Activated naive CD8-positive, alpha-beta T cell treated with anti-CD3 and anti-CD28 coated beads, Interleukin-2, amount 10 ng/mL, durations not matched to agents 7 days and 5 days (primary cell): ENCODE measurements at regions of chr17 and their contacts with region 1.

Region 1: GRCh38 chr17:39730095-39730921 is at the start of gene MIEN1:
- DNase-seq: peak; percentile 100
- ATAC-seq: peak; percentile 86
- H3K4me3 Mint-ChIP-seq: peak within 1 kb of the TSS; percentile 96
- H3K27ac Mint-ChIP-seq: peak within 1 kb of the TSS; percentile 92
- H3K4me1 Mint-ChIP-seq: peaks cover 12% of the 10 kb centered on the region
- H3K27me3 Mint-ChIP-seq: peaks cover 7% of the 10 kb centered on the region
- total RNA-seq, gene MIEN1: 38.1 to 38.6 TPM

Region 2: GRCh38 chr17:39687811-39688518 is 42.3 kb before region 1 on chr17 and contains the start of gene PGAP3:
- POLR2A ChIA-PET with region 1: interaction called, 20 read pairs
- DNase-seq: peak; percentile 88
- ATAC-seq: peak; percentile 94
- H3K4me3 Mint-ChIP-seq: peak within 1 kb of the TSS; percentile 88
- H3K27ac Mint-ChIP-seq: peak within 1 kb of the TSS; percentile 89
- H3K4me1 Mint-ChIP-seq: peaks cover 14% of the 10 kb centered on the region
- H3K27me3 Mint-ChIP-seq: no peaks in the 10 kb centered on the region
- total RNA-seq, gene PGAP3: 18.3 to 23.9 TPM

Region 3: DNA sequence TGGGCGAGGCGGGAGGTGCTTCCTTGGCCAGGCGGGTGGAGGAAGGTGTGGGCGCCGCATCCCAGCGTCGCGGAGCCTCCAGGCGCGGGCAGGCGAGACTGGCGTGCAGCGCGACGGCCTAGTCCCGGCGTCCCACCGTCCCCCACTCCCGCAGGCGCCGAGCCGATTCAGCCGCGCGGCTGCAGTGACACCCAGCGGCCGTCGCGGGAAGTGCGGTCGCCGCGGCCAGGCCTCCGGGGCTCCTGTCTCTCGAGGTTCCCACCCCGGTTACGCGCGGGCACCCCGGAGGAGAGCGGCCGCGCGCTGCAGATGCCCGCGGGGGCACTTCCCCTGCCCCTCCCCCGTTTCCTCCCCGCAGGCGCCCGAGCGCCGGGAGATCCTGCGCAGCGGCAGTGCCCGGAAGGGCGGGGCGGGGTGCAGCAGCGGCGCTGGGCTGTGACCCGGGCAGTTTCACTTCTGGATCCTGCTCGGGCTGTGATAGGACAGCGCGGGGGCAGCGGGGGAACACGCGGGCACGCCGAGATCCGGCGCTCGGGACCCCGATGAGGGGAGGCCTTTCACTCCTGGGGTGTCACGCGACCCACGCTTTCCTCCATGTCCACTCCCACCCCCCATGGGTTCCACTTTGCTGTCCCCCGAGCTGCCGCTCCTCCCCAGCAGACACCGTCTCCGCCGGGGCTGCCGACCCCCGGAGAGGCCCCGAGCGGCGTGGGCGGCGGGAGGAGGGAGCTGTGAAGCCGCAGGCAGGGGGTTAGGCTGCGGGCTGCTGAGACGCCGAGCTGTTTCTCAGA is 24.0 kb after region 1 on chr17:
- POLR2A ChIA-PET with region 1: interaction called, 14 read pairs
- DNase-seq: peak; percentile 99
- ATAC-seq: peak; percentile 90
- H3K4me3 Mint-ChIP-seq: peak overlapping the region; percentile 88
- H3K27ac Mint-ChIP-seq: peak overlapping the region; percentile 93
- H3K4me1 Mint-ChIP-seq: peaks cover 47% of the 10 kb centered on the region
- H3K27me3 Mint-ChIP-seq: no peaks in the 10 kb centered on the region

Region 4: DNA sequence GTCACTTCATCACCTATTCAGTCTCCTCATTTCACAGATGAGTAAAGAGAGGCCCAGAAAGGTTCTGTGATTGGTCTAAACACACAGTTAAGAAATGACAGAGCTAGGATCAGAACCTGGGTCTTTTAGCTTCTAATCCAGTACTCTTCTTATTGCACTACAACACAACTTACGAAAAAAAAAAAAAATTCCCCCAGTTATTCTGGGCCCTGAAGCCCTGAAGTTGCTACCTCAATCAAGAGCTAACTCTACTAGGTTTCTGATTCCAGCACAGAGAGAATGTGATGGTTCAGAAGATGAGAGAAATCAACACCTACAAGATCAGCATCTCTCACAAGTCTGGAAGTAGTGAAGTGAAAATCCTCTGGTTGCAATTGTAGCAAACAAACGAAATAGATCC is 44.7 kb after region 1 on chr17:
- POLR2A ChIA-PET with region 1: no interaction called
- DNase-seq: no peak
- ATAC-seq: no peak
- H3K4me3 Mint-ChIP-seq: peak overlapping the region; percentile 85
- H3K27ac Mint-ChIP-seq: peak overlapping the region; percentile 87
- H3K4me1 Mint-ChIP-seq: peaks cover 78% of the 10 kb centered on the region
- H3K27me3 Mint-ChIP-seq: no peaks in the 10 kb centered on the region

Region 5: DNA sequence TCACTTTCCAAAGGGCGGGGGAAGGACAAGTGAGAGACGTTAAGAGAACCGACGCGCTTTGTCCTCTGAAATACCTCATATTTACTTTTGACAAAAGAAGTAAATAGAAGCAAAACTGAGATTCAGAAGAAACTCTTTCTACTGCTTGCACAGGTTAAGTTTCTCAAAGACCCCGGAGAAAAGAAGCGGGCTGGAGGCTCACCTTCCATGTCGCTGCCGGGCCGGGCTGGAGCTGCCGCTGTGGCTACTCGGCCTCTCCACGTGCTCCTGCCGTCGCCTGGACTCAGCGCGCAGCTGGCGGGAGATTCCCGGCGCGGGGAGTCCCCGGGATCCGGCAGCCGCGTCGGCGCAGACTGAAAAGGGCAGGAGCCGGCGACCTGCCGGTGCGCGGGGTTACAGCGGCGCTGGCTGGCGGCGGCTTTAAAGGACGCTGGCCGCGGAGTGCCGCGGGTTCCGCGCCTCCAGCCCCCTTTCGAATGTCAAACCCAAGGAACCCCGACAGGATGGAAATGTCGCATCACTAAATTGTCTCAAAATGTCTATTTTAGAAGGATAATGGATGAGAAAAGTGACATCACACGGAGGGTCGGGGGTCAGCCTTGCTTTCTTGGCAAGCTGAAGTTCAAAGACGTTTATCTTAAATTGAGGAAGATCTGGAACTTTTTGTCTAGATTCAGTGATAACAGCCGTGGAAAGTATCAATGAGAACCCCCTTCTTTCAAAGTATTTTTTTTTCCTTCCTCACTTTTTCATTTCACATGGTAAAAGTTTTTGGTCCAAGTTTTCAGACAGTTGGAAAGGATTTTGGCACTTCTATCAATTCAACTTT is 133.8 kb after region 1 on chr17 and contains the start of gene IKZF3:
- POLR2A ChIA-PET with region 1: interaction called, 10 read pairs
- DNase-seq: peak; percentile 82
- ATAC-seq: peak; percentile 77
- H3K4me3 Mint-ChIP-seq: peak within 1 kb of the TSS; percentile 91
- H3K27ac Mint-ChIP-seq: peak within 1 kb of the TSS; percentile 92
- H3K4me1 Mint-ChIP-seq: peaks cover 49% of the 10 kb centered on the region
- H3K27me3 Mint-ChIP-seq: no peaks in the 10 kb centered on the region
- total RNA-seq, gene IKZF3: 78.5 to 83.5 TPM